ENCODE measurements at regions of chr3 and their contacts with region 1.

Region 1: GRCh38 chr3:188954590-188955208 is 217.1 kb upstream of the TPRG1 start:
- DNase-seq: peak; percentile 82
- ATAC-seq: peak; percentile 83
- H3K4me3 ChIP-seq: no peak overlapping the region
- H3K4me3 Mint-ChIP-seq: no peak overlapping the region
- H3K27ac ChIP-seq: no peak overlapping the region
- H3K27ac Mint-ChIP-seq: no peak overlapping the region
- H3K4me1 ChIP-seq: no peaks in the 10 kb centered on the region
- H3K4me1 Mint-ChIP-seq: peaks cover 3% of the 10 kb centered on the region
- H3K27me3 ChIP-seq: no peaks in the 10 kb centered on the region
- H3K27me3 Mint-ChIP-seq: no peaks in the 10 kb centered on the region
- CTCF ChIP-seq: peak; percentile 88

Region 2: GRCh38 chr3:187616307-187616972 is 1338.3 kb before region 1 on chr3:
- CTCF ChIA-PET with region 1: interaction called, 17 read pairs
- POLR2A ChIA-PET with region 1: no interaction called
- intact Hi-C with region 1: no loop called
- DNase-seq: peak; percentile 56
- ATAC-seq: no peak
- H3K4me3 ChIP-seq: no peak overlapping the region
- H3K4me3 Mint-ChIP-seq: no peak overlapping the region
- H3K27ac ChIP-seq: no peak overlapping the region
- H3K27ac Mint-ChIP-seq: no peak overlapping the region
- H3K4me1 ChIP-seq: no peaks in the 10 kb centered on the region
- H3K4me1 Mint-ChIP-seq: no peaks in the 10 kb centered on the region
- H3K27me3 ChIP-seq: peaks cover 0 to 7% (median 2%) of the 10 kb centered on the region in 4 experiments
- H3K27me3 Mint-ChIP-seq: peaks cover 24% of the 10 kb centered on the region
- CTCF ChIP-seq: peak; percentile 87

Region 3: DNA sequence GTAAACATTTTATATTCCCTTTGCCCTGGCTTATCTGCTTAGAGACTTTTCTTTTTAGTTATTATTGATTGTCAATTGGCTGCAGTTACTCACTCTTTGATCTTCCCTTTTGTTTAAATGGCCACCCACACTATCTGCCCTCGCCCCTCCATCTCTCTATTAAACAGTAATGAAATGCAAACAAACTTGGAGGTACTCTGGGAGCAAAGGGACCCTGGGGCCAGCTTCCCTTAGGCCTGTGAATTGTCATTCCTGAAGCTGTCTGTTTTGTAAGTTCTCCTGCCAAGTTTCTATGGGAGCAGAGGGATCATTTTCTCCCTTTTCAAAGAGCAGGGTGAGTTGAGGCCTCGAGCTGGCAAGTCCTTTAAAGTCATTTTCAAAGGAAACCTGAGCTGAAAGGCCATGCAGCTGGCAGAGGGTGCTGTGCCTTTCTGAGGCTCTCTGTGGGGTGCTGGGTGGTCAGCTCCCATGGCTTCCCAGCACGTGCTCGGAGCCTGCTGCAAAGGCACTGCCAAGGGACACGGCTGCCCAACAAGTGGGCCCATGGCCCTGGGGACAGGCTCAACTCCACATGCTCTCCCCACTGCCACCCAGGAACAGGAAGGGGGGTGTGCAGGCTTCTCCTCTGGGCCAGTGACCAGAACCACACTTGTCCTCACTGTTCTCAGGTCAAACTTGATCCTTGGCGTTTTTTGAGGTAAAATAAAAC is 1234.9 kb before region 1 on chr3:
- CTCF ChIA-PET with region 1: interaction called, 15 read pairs
- POLR2A ChIA-PET with region 1: no interaction called
- intact Hi-C with region 1: no loop called
- DNase-seq: no peak
- ATAC-seq: no peak
- H3K4me3 ChIP-seq: no peak overlapping the region
- H3K4me3 Mint-ChIP-seq: no peak overlapping the region
- H3K27ac ChIP-seq: no peak overlapping the region
- H3K27ac Mint-ChIP-seq: no peak overlapping the region
- H3K4me1 ChIP-seq: no peaks in the 10 kb centered on the region
- H3K4me1 Mint-ChIP-seq: no peaks in the 10 kb centered on the region
- H3K27me3 ChIP-seq: no peaks in the 10 kb centered on the region
- H3K27me3 Mint-ChIP-seq: no peaks in the 10 kb centered on the region
- CTCF ChIP-seq: no peak

Region 4: DNA sequence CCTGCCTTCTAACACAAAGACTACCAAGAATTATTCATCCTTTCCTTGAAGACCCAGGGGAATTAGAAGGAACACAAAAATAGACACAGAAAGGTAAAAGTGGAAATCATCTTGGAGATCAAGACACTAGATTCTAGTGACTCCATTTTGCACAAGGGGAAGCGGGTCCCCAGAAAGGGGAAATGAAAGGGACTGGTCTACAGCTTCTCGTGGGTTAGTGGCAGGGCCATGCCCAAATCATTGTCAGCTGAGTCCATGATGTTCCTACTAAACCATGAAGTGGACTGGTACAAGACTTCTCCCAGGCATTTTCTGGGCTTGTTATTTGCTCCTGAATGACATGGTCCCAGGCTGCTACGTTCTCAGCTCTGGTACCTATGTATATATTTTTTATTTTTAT is 13.6 kb before region 1 on chr3:
- CTCF ChIA-PET with region 1: interaction called, 62 read pairs
- POLR2A ChIA-PET with region 1: no interaction called
- intact Hi-C with region 1: no loop called
- DNase-seq: peak; percentile 73
- ATAC-seq: peak; percentile 85
- H3K4me3 ChIP-seq: no peak overlapping the region
- H3K4me3 Mint-ChIP-seq: no peak overlapping the region
- H3K27ac ChIP-seq: no peak overlapping the region
- H3K27ac Mint-ChIP-seq: no peak overlapping the region
- H3K4me1 ChIP-seq: peaks cover 6 to 11% of the 10 kb centered on the region in 2 donors
- H3K4me1 Mint-ChIP-seq: peaks cover 7% of the 10 kb centered on the region
- H3K27me3 ChIP-seq: no peaks in the 10 kb centered on the region
- H3K27me3 Mint-ChIP-seq: peaks cover 3% of the 10 kb centered on the region
- CTCF ChIP-seq: no peak

Region 5: GRCh38 chr3:189148081-189148507 is 193.4 kb after region 1 on chr3:
- CTCF ChIA-PET with region 1: interaction called, 10 read pairs
- POLR2A ChIA-PET with region 1: no interaction called
- intact Hi-C with region 1: loop called (anchors 2 kb)
- DNase-seq: peak; percentile 71
- ATAC-seq: peak; percentile 58
- H3K4me3 ChIP-seq: no peak overlapping the region
- H3K4me3 Mint-ChIP-seq: no peak overlapping the region
- H3K27ac ChIP-seq: no peak overlapping the region
- H3K27ac Mint-ChIP-seq: no peak overlapping the region
- H3K4me1 ChIP-seq: no peaks in the 10 kb centered on the region
- H3K4me1 Mint-ChIP-seq: no peaks in the 10 kb centered on the region
- H3K27me3 ChIP-seq: no peaks in the 10 kb centered on the region
- H3K27me3 Mint-ChIP-seq: peaks cover 28% of the 10 kb centered on the region
- CTCF ChIP-seq: peak; percentile 84

Measured in B cell (primary cell).